CD14-positive monocyte (primary cell): ENCODE measurements at regions of chrX and their contacts with region 1.

Region 1: GRCh38 chrX:103817502-103817901 is 14.6 kb downstream of the RAB9B start:
- DNase-seq: peak; percentile 23 to 60 (median 27)
- H3K4me3 ChIP-seq: no peak overlapping the region
- H3K4me3 Mint-ChIP-seq: no peak overlapping the region
- H3K27ac ChIP-seq: no peak overlapping the region
- H3K27ac Mint-ChIP-seq: no peak overlapping the region
- H3K4me1 ChIP-seq: peaks cover 0 to 3% of the 10 kb centered on the region in 2 donors
- H3K4me1 Mint-ChIP-seq: peaks cover 6% of the 10 kb centered on the region
- H3K27me3 ChIP-seq: no peaks in the 10 kb centered on the region
- H3K27me3 Mint-ChIP-seq: peaks cover 0 to 3% (median 0%) of the 10 kb centered on the region in 3 donors
- CTCF ChIP-seq: peak; percentile 68

Region 2: GRCh38 chrX:103533511-103534216 is 283.8 kb before region 1 on chrX:
- intact Hi-C with region 1: loop called (anchors 5 kb)
- DNase-seq: peak; percentile 46 to 53 (median 50)
- H3K4me3 ChIP-seq: peak overlapping the region; percentile 20 to 48 (median 25)
- H3K4me3 Mint-ChIP-seq: peak overlapping the region; percentile 52 to 82
- H3K27ac ChIP-seq: no peak overlapping the region
- H3K27ac Mint-ChIP-seq: no peak overlapping the region
- H3K4me1 ChIP-seq: peaks cover 3% of the 10 kb centered on the region in 2 donors
- H3K4me1 Mint-ChIP-seq: peaks cover 4% of the 10 kb centered on the region
- H3K27me3 ChIP-seq: no peaks in the 10 kb centered on the region
- H3K27me3 Mint-ChIP-seq: peaks cover 0 to 3% (median 0%) of the 10 kb centered on the region in 3 donors
- CTCF ChIP-seq: peak; percentile 72

Region 3: GRCh38 chrX:103711533-103712369 is 105.8 kb before region 1 on chrX:
- intact Hi-C with region 1: loop called in 1 of 2 experiments (anchors 10 kb)
- DNase-seq: peak; percentile 36 to 49 (median 38)
- H3K4me3 ChIP-seq: no peak overlapping the region
- H3K4me3 Mint-ChIP-seq: no peak overlapping the region
- H3K27ac ChIP-seq: no peak overlapping the region
- H3K27ac Mint-ChIP-seq: no peak overlapping the region
- H3K4me1 ChIP-seq: no peaks in the 10 kb centered on the region
- H3K4me1 Mint-ChIP-seq: no peaks in the 10 kb centered on the region
- H3K27me3 ChIP-seq: no peaks in the 10 kb centered on the region
- H3K27me3 Mint-ChIP-seq: peaks cover 0 to 7% (median 0%) of the 10 kb centered on the region in 3 donors
- CTCF ChIP-seq: peak; percentile 63